ENCODE measurements at regions of chr3 and their contacts with region 1.

Region 1: GRCh38 chr3:155323063-155323666 is 29.7 kb upstream of the STRIT1 start:
- DNase-seq: peak; percentile 71
- H3K4me3 Mint-ChIP-seq: no peak overlapping the region
- H3K27ac Mint-ChIP-seq: no peak overlapping the region
- H3K4me1 Mint-ChIP-seq: peaks cover 61% of the 10 kb centered on the region
- H3K27me3 Mint-ChIP-seq: no peaks in the 10 kb centered on the region
- CTCF ChIP-seq: peak; percentile 73

Region 2: GRCh38 chr3:154758109-154758868 is 564.9 kb before region 1 on chr3:
- CTCF ChIA-PET with region 1: interaction called, 7 read pairs
- intact Hi-C with region 1: loop called (anchors 1 kb)
- DNase-seq: no peak
- H3K4me3 Mint-ChIP-seq: no peak overlapping the region
- H3K27ac Mint-ChIP-seq: no peak overlapping the region
- H3K4me1 Mint-ChIP-seq: no peaks in the 10 kb centered on the region
- H3K27me3 Mint-ChIP-seq: no peaks in the 10 kb centered on the region
- CTCF ChIP-seq: no peak

Region 3: DNA sequence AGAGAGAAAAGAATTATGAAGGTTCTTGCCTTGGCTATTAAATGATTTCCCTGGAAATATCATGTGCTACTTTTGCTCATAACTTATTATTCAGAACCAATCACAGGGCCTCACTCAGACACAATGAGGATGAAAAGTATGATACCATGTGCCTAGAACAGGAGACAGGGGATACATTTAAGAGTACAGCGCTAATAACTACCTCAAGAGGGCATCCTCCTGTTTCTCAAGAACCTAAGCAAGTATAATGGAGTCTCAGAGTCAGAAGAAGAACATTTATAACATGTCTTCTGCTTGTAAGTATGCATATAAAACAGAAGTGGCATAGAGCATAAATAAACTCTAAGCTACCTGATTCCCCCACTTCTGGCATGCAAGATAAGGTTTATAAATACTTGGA is 368.4 kb before region 1 on chr3:
- CTCF ChIA-PET with region 1: interaction called, 10 read pairs
- intact Hi-C with region 1: loop called (anchors 1 kb)
- DNase-seq: no peak
- H3K4me3 Mint-ChIP-seq: no peak overlapping the region
- H3K27ac Mint-ChIP-seq: no peak overlapping the region
- H3K4me1 Mint-ChIP-seq: peaks cover 13% of the 10 kb centered on the region
- H3K27me3 Mint-ChIP-seq: no peaks in the 10 kb centered on the region
- CTCF ChIP-seq: peak; percentile 37

Region 4: DNA sequence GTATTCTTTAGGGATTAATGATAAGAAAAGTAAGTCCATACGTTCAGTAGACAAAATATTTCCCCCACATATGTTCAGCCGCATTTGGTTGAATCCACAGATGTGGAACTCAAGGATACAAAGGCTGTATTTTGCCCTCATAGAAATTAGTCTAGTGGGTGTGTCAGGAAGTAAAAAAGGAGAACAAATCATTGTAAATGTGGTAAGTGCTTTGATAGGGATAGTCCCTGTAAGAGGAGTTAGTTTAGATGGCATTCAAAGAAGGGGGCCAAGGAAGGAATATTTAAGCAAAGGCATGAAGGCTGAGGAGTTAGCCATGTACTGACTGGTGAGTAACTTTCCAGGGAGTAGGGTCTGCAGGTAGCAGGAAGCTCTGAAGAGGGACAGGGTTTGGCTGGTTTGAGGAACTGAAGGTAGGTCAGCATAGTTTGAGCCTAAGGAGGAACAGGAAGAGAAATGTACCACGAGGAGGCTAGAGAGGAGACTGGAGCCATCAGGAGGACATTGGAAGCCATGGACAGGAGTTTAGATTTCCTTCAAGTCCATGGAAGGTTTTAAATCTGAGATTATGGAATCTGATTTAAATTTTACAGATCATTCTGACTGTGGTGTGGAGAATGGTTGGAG is 144.2 kb before region 1 on chr3:
- CTCF ChIA-PET with region 1: interaction called, 3 read pairs
- intact Hi-C with region 1: loop called (anchors 1 kb)
- DNase-seq: no peak
- H3K4me3 Mint-ChIP-seq: no peak overlapping the region
- H3K27ac Mint-ChIP-seq: no peak overlapping the region
- H3K4me1 Mint-ChIP-seq: peaks cover 12% of the 10 kb centered on the region
- H3K27me3 Mint-ChIP-seq: no peaks in the 10 kb centered on the region
- CTCF ChIP-seq: no peak

Region 5: GRCh38 chr3:155232605-155233004 is 90.6 kb before region 1 on chr3:
- CTCF ChIA-PET with region 1: interaction called, 8 read pairs
- intact Hi-C with region 1: loop called (anchors 2 kb)
- DNase-seq: peak; percentile 80
- H3K4me3 Mint-ChIP-seq: no peak overlapping the region
- H3K27ac Mint-ChIP-seq: peak overlapping the region; percentile 69
- H3K4me1 Mint-ChIP-seq: peaks cover 26% of the 10 kb centered on the region
- H3K27me3 Mint-ChIP-seq: no peaks in the 10 kb centered on the region
- CTCF ChIP-seq: no peak

Region 6: GRCh38 chr3:155282385-155283091 is 40.6 kb before region 1 on chr3:
- CTCF ChIA-PET with region 1: no interaction called
- intact Hi-C with region 1: loop called (anchors 2 kb)
- DNase-seq: peak; percentile 67
- H3K4me3 Mint-ChIP-seq: no peak overlapping the region
- H3K27ac Mint-ChIP-seq: no peak overlapping the region
- H3K4me1 Mint-ChIP-seq: no peaks in the 10 kb centered on the region
- H3K27me3 Mint-ChIP-seq: no peaks in the 10 kb centered on the region
- CTCF ChIP-seq: no peak

Measured in Calu3 (cell line).